ENCODE measurements at regions of chr12 and their contacts with region 1.

Region 1: DNA sequence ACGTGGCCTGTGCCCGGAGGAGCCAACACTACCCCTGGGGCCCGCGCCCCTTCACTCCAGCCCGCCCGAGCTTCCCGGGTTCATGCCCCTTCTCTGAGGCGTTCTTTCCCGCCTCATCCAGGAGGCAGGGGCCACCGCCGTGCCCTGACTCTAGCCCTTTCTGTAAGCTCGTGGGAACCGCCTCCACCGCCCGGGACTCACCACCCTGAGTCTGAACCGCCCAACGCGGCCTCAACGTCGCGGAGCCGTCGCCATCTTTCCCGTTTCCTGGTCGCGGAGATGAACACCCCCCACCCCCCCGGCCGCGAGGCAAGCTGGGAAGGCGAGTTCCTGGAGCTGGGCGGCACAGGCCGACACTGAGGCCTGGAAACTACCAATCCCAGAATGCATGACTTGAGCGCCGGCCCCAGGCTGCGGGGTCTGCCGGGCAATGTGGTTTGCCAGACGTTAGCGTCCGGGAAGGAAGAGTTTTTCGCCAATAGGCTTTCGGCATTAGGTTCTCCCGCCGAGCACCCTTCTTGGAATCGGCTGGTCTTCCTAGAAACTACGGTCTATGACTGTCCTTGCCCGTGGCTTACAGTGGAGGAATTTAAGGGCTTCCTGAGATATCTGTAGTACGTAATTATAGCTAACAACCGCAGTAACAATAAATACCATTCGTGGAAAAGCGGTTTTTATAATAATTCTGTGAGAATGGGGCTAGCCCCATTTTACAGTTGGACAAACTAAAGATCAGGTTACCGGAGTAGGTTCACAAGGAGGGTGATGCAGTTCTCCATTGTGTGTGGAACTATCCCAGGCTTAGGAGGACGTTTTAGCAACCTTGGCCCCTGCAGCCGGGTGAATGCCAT is at the start of gene DDX23:
- DNase-seq: peak; percentile 85 to 97
- H3K4me3 ChIP-seq: peak within 1 kb of the TSS; percentile 79 to 89
- H3K27ac ChIP-seq: peak within 1 kb of the TSS; percentile 77 to 83
- H3K4me1 ChIP-seq: peaks cover 5 to 20% of the 10 kb centered on the region in 2 donors
- H3K27me3 ChIP-seq: no peaks in the 10 kb centered on the region
- CTCF ChIP-seq: no peak
- total RNA-seq, gene DDX23: 39.4 TPM

Region 2: GRCh38 chr12:48814262-48815125 is 37.6 kb before region 1 on chr12:
- intact Hi-C with region 1: loop called (anchors 2 kb)
- DNase-seq: peak; percentile 36 to 92
- H3K4me3 ChIP-seq: peak overlapping the region; percentile 81 to 92
- H3K27ac ChIP-seq: peak overlapping the region; percentile 91 to 92
- H3K4me1 ChIP-seq: peaks cover 11 to 35% of the 10 kb centered on the region in 2 donors
- H3K27me3 ChIP-seq: no peaks in the 10 kb centered on the region
- CTCF ChIP-seq: peak; percentile 98 to 99 (median 99)

Region 3: DNA sequence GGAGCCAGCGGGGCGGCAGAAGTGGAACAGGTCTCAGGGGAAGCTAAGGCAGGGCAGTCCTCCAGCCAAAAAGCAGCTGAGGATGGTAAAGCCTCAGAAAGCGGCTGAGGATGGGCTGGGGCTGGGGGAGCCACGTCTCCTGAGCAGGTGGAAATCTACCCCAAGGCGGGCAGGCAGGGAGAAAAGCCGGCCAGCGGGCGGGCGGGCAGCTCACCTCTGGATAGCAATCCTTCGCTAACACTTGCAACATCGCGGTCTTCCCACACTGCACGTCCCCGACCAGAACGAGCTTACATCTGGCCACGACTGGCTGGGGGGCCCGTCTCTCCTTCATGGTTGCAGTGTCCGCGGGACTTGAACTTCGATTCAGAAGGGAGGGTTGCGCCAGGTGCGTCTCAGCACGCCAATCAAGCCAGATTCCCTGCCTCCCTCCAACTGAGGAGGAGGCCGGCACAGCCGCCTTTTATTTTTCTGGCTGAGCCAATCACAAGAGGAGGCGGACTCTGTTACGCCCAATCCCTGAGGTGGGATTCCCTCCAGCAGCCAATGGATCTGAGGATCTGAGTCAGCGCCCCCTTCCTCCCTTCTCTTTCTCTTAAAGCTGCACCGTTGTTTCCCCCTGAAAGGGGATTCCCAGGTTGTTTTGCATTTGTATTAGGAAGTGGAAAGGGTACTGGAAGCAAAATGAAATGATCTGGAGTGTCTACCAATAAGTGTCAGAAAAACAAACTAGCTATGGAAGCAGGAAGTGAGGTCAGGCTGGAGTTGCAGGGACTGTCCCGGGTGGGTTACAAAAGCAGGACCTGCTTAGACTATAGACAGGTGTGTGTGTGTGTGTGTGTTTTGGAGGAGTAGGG is 13.6 kb after region 1 on chr12 and contains the start of gene RND1:
- intact Hi-C with region 1: loop called (anchors 1 kb)
- DNase-seq: peak; percentile 73 to 94
- H3K4me3 ChIP-seq: peak within 1 kb of the TSS; percentile 71 to 90
- H3K27ac ChIP-seq: no peak within 1 kb of the TSS
- H3K4me1 ChIP-seq: peaks cover 3 to 10% of the 10 kb centered on the region in 2 donors
- H3K27me3 ChIP-seq: no peaks in the 10 kb centered on the region
- CTCF ChIP-seq: peak in 1 of 3 experiments; percentile 15
- total RNA-seq, gene RND1: 0.85 TPM

Region 4: GRCh38 chr12:48890657-48891418 is 38.7 kb after region 1 on chr12:
- intact Hi-C with region 1: loop called (anchors 1 kb)
- DNase-seq: peak; percentile 25 to 88
- H3K4me3 ChIP-seq: peak overlapping the region; percentile 37 to 60
- H3K27ac ChIP-seq: no peak overlapping the region
- H3K4me1 ChIP-seq: no peaks in the 10 kb centered on the region
- H3K27me3 ChIP-seq: no peaks in the 10 kb centered on the region
- CTCF ChIP-seq: peak; percentile 92 to 98 (median 93)

Region 5: GRCh38 chr12:48936379-48936979 is 84.4 kb after region 1 on chr12:
- intact Hi-C with region 1: loop called (anchors 2 kb)
- DNase-seq: peak in 1 of 2 donors; percentile 87
- H3K4me3 ChIP-seq: no peak overlapping the region
- H3K27ac ChIP-seq: no peak overlapping the region
- H3K4me1 ChIP-seq: no peaks in the 10 kb centered on the region
- H3K27me3 ChIP-seq: no peaks in the 10 kb centered on the region
- CTCF ChIP-seq: peak; percentile 65 to 89 (median 83)

Region 6: GRCh38 chr12:48957141-48958048 is 105.3 kb after region 1 on chr12 and contains the start of gene ARF3:
- intact Hi-C with region 1: loop called (anchors 2 kb)
- DNase-seq: peak; percentile 75 to 96
- H3K4me3 ChIP-seq: peak within 1 kb of the TSS; percentile 72 to 95
- H3K27ac ChIP-seq: peak within 1 kb of the TSS; percentile 81 to 84
- H3K4me1 ChIP-seq: peaks cover 0 to 18% of the 10 kb centered on the region in 2 donors
- H3K27me3 ChIP-seq: no peaks in the 10 kb centered on the region
- CTCF ChIP-seq: no peak
- total RNA-seq, gene ARF3: 68.4 TPM

Region 7: DNA sequence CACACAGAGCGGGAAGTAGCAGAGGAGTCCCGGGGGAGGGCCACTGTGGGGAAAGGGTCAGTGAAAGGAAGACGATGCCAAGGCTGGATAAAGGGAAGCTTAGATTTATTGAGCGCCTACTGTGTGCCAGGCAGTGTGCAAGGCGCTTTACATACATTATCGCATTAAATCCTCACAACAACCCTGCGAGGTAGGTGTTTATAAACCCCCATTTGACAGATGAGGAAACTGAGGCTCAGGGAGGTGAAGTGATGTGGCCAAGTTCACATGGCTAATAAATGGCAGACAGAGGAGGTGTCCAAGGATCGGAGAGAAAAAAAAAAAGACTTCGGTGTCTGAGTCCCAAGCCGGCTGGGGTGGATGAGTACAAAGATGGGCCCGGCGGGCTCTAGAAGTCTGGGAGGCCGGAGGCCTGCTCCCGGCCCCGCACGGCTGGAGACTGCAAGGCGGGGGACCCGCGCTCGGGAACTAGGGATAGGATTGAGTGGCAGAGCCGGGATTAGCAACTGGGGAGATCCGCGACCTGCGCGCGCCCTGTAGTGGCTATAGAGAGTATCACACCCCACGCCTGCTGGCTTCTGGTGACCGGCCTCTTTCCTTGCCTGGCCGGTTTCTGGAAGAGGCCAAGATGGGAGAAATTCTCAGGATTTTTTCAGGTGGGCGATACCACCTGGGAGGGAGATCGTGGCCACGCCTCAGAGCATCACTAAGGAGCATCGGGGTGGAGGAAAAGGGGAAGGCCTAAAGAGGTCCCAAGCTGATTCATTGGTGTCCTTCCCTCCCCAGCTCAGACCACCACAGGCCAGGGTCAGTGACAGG is 143.2 kb after region 1 on chr12:
- intact Hi-C with region 1: loop called (anchors 2 kb)
- DNase-seq: peak in 1 of 2 donors; percentile 86
- H3K4me3 ChIP-seq: peak overlapping the region in 1 of 2 donors; percentile 45
- H3K27ac ChIP-seq: no peak overlapping the region
- H3K4me1 ChIP-seq: peaks cover 20 to 29% of the 10 kb centered on the region in 2 donors
- H3K27me3 ChIP-seq: peaks cover 21% of the 10 kb centered on the region
- CTCF ChIP-seq: peak; percentile 80 to 96 (median 92)

Measured in ascending aorta (tissue), 2 donors.